Sigmoid colon (tissue), 7 donors: ENCODE measurements at regions of chr10 and their contacts with region 1.

Region 1: GRCh38 chr10:76558586-76558985 is 1079.0 kb downstream of the KCNMA1 start:
- DNase-seq: peak; percentile 80
- H3K4me3 ChIP-seq: no peak overlapping the region
- H3K27ac ChIP-seq: peak overlapping the region; percentile 41 to 77 (median 66)
- H3K4me1 ChIP-seq: peaks cover 0 to 57% (median 47%) of the 10 kb centered on the region in 4 donors
- H3K27me3 ChIP-seq: no peaks in the 10 kb centered on the region
- CTCF ChIP-seq: no peak
- EP300 ChIP-seq: no peak
- POLR2A ChIP-seq: no peak

Region 2: DNA sequence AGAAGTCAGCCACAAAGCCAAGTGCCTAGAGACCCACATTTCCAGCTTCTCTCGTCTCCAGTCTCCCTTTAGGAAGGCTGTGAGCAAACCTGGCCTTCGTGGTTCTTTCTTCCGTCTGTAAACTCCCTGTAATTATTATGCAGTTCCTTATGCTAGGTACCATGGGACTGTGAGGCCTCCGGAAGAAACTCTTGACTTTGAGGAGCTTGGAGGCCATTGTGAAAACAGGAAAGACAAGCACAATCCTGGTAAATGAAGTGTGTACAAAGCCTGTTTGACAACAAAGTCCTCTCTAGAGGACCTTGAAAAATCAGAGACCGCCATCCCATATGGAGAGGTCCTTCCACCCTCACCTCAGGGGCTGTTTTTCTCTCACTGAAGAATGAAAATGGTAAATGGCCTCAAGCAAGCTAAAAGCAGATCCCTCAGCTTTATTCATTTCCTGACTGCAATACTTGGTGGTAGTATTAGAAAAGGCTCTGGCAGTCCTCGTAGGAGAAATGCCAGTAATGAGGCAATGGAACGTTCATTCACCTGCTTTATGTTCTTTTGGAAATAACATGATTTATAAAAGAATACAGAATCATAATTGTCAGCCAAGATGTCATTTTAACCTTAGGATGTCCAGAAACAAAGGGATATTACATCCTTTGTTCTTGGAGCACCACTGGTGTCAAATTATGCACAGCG is 200.7 kb before region 1 on chr10:
- intact Hi-C with region 1: no loop called
- DNase-seq: no peak
- H3K4me3 ChIP-seq: no peak overlapping the region
- H3K27ac ChIP-seq: peak overlapping the region in 1 of 4 donors; percentile 22
- H3K4me1 ChIP-seq: peaks cover 0 to 31% (median 15%) of the 10 kb centered on the region in 4 donors
- H3K27me3 ChIP-seq: no peaks in the 10 kb centered on the region
- CTCF ChIP-seq: no peak
- EP300 ChIP-seq: no peak
- POLR2A ChIP-seq: no peak

Region 3: GRCh38 chr10:76479103-76479790 is 79.3 kb before region 1 on chr10:
- intact Hi-C with region 1: no loop called
- DNase-seq: no peak
- H3K4me3 ChIP-seq: no peak overlapping the region
- H3K27ac ChIP-seq: no peak overlapping the region
- H3K4me1 ChIP-seq: peaks cover 0 to 16% (median 14%) of the 10 kb centered on the region in 4 donors
- H3K27me3 ChIP-seq: no peaks in the 10 kb centered on the region
- CTCF ChIP-seq: no peak
- EP300 ChIP-seq: no peak
- POLR2A ChIP-seq: no peak

Region 4: GRCh38 chr10:76643511-76643911 is 84.9 kb after region 1 on chr10:
- intact Hi-C with region 1: loop called (anchors 5 kb)
- DNase-seq: peak; percentile 94
- H3K4me3 ChIP-seq: no peak overlapping the region
- H3K27ac ChIP-seq: peak overlapping the region in 3 of 4 donors; percentile 80 to 81 (median 81)
- H3K4me1 ChIP-seq: peaks cover 0 to 91% (median 60%) of the 10 kb centered on the region in 4 donors
- H3K27me3 ChIP-seq: no peaks in the 10 kb centered on the region
- CTCF ChIP-seq: no peak
- EP300 ChIP-seq: peak in 1 of 4 donors; percentile 15
- POLR2A ChIP-seq: no peak